Activated B cell treated with CpG ODN at 0.5 μM for 24 hours (primary cell): ENCODE measurements at regions of chr17 and their contacts with region 1.

Region 1: GRCh38 chr17:18896146-18896545 is 38.2 kb downstream of the PRPSAP2 start:
- DNase-seq: no peak
- ATAC-seq: no peak
- H3K4me3 Mint-ChIP-seq: no peak overlapping the region
- H3K27ac Mint-ChIP-seq: no peak overlapping the region
- H3K4me1 Mint-ChIP-seq: peaks cover 23% of the 10 kb centered on the region
- H3K27me3 Mint-ChIP-seq: no peaks in the 10 kb centered on the region
- CTCF ChIP-seq: no peak

Region 2: DNA sequence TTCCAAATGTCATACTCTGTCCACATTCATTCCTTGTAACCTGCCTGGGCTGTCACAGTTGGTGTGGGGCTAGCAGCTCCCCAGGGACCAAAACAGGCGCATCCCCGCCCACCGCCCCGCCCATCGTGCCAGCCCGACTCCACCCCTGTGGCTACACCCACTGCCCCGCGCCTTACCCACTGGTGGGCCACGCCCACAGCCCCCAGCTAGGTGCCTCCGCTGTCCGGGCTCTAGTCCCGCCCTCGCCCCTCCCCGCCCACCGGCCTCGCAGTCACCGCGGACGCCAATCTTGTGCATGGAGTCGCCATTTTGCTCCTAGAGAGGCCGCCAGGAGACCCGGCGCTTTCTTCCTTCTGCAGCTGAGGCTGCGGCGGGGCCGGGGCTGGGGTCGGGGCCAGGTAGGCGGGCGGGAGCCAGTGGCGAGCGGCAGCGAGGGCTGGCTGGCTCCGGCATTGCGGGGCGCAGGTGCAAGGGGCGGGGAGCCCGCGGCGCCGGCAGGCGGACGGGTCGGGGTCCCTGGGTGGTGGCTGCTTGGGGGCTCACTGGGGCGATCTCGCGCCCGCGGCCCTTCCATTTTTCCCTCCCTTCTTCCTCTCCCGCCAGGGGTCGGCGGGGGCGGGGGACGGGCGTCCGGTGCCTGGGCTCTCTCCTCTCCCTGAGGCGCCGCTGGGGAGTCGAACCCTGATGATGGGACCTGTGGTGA is 38.1 kb before region 1 on chr17 and contains the start of gene PRPSAP2:
- CTCF ChIA-PET with region 1: no interaction called
- POLR2A ChIA-PET with region 1: interaction called, 11 read pairs
- intact Hi-C with region 1: no loop called
- DNase-seq: peak; percentile 89
- ATAC-seq: peak; percentile 85
- H3K4me3 Mint-ChIP-seq: peak within 1 kb of the TSS; percentile 98
- H3K27ac Mint-ChIP-seq: peak within 1 kb of the TSS; percentile 88
- H3K4me1 Mint-ChIP-seq: peaks cover 54% of the 10 kb centered on the region
- H3K27me3 Mint-ChIP-seq: no peaks in the 10 kb centered on the region
- CTCF ChIP-seq: no peak
- total RNA-seq, gene PRPSAP2: 56.7 and 62.8 TPM in 2 replicates

Region 3: GRCh38 chr17:18916816-18917500 is 20.8 kb after region 1 on chr17:
- CTCF ChIA-PET with region 1: no interaction called
- POLR2A ChIA-PET with region 1: interaction called, 5 read pairs
- intact Hi-C with region 1: loop called (anchors 2 kb)
- DNase-seq: no peak
- ATAC-seq: peak; percentile 57
- H3K4me3 Mint-ChIP-seq: peak overlapping the region; percentile 33
- H3K27ac Mint-ChIP-seq: peak overlapping the region; percentile 80
- H3K4me1 Mint-ChIP-seq: peaks cover 53% of the 10 kb centered on the region
- H3K27me3 Mint-ChIP-seq: no peaks in the 10 kb centered on the region
- CTCF ChIP-seq: no peak

Region 4: GRCh38 chr17:18921912-18922451 is 25.8 kb after region 1 on chr17:
- CTCF ChIA-PET with region 1: no interaction called
- POLR2A ChIA-PET with region 1: interaction called, 10 read pairs
- intact Hi-C with region 1: loop called (anchors 2 kb)
- DNase-seq: no peak
- ATAC-seq: peak; percentile 79
- H3K4me3 Mint-ChIP-seq: peak overlapping the region; percentile 79
- H3K27ac Mint-ChIP-seq: peak overlapping the region; percentile 95
- H3K4me1 Mint-ChIP-seq: peaks cover 70% of the 10 kb centered on the region
- H3K27me3 Mint-ChIP-seq: no peaks in the 10 kb centered on the region
- CTCF ChIP-seq: no peak